Activated T-helper 1 cell treated with anti-CD3 and anti-CD28 coated beads, Interleukin-12 subunit alpha, Interleukin-12 subunit beta, Interleukin-2, Interleukin-4 antibody, amounts not matched to agents 30 ng/mL and 10 ng/mL and 1 ng/mL, durations not matched to agents 14 hours and 24 hours and 36 hours (primary cell): ENCODE measurements at regions of chr10 and their contacts with region 1.

Region 1: DNA sequence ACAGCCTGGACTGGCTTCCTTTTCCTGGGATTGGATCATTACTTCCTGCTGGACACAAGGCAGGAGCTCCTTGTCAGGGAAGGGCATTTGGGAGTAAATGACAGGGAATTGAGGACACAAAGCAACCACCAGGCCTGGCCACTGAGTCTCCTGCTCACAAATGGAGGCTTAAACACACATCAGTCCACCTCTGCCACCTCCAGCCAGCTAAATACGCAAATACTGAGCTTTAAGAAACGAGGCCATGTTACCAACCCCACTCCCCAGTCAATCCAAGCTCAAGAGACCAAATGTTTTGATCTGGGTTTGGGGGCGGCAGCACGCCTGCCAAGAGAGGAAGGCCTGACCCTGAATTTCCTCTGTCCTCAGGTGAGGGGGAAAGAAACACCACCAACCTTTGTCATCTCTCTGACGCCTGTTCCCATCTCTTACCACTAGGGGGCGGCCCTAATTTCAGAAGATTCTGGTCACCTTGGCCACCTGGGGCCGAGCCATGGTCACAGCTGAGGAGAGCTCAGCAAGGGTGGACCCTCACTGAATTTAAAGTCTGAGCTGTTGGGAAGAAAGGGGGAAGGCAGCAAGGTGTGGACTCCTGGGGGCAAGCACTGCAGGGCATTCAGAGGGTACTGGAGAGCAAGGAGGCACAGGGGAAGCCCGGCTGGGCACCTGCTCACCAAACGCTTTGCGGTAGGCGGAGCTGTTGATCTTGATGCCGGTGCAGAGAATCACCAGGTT is 16.5 kb downstream of the AIFM2 start:
- DNase-seq: peak; percentile 41
- H3K4me3 Mint-ChIP-seq: no peak overlapping the region
- H3K27ac Mint-ChIP-seq: no peak overlapping the region
- H3K4me1 Mint-ChIP-seq: peaks cover 8% of the 10 kb centered on the region
- H3K27me3 Mint-ChIP-seq: peaks cover 2% of the 10 kb centered on the region

Region 2: GRCh38 chr10:70096705-70097420 is 19.3 kb before region 1 on chr10:
- intact Hi-C with region 1: no loop called
- DNase-seq: no peak
- H3K4me3 Mint-ChIP-seq: no peak overlapping the region
- H3K27ac Mint-ChIP-seq: no peak overlapping the region
- H3K4me1 Mint-ChIP-seq: peaks cover 27% of the 10 kb centered on the region
- H3K27me3 Mint-ChIP-seq: no peaks in the 10 kb centered on the region

Region 3: GRCh38 chr10:70132098-70133029 is 16.2 kb after region 1 on chr10 and contains the start of gene AIFM2:
- intact Hi-C with region 1: loop called (anchors 2 kb)
- DNase-seq: no peak
- H3K4me3 Mint-ChIP-seq: peak within 1 kb of the TSS; percentile 86
- H3K27ac Mint-ChIP-seq: peak within 1 kb of the TSS; percentile 82
- H3K4me1 Mint-ChIP-seq: peaks cover 15% of the 10 kb centered on the region
- H3K27me3 Mint-ChIP-seq: peaks cover 9% of the 10 kb centered on the region
- total RNA-seq, gene AIFM2: 7.1 and 7.3 TPM in 2 replicates

Region 4: GRCh38 chr10:70363971-70364771 is 248.1 kb after region 1 on chr10:
- intact Hi-C with region 1: loop called (anchors 1 kb)
- DNase-seq: peak; percentile 81
- H3K4me3 Mint-ChIP-seq: peak overlapping the region; percentile 39
- H3K27ac Mint-ChIP-seq: no peak overlapping the region
- H3K4me1 Mint-ChIP-seq: peaks cover 14% of the 10 kb centered on the region
- H3K27me3 Mint-ChIP-seq: no peaks in the 10 kb centered on the region